ENCODE measurements at regions of chr4 and their contacts with region 1.

Region 1: GRCh38 chr4:142353149-142353738 is 492.9 kb downstream of the INPP4B start:
- DNase-seq: no peak
- ATAC-seq: peak; percentile 41
- H3K4me3 ChIP-seq: no peak overlapping the region
- H3K27ac ChIP-seq: no peak overlapping the region
- H3K4me1 ChIP-seq: no peaks in the 10 kb centered on the region
- H3K27me3 ChIP-seq: no peaks in the 10 kb centered on the region
- CTCF ChIP-seq: peak; percentile 68 to 76 (median 72)
- EP300 ChIP-seq: no peak
- POLR2A ChIP-seq: no peak
- RAD21 ChIP-seq: peak; percentile 73

Region 2: GRCh38 chr4:141724646-141725045 is 628.6 kb before region 1 on chr4:
- CTCF ChIA-PET with region 1: no interaction called
- POLR2A ChIA-PET with region 1: no interaction called
- RAD21 ChIA-PET with region 1: no interaction called
- SMC1A ChIA-PET with region 1: no interaction called
- in situ Hi-C with region 1: no loop called
- intact Hi-C with region 1: no loop called
- DNase-seq: no peak
- ATAC-seq: no peak
- H3K4me3 ChIP-seq: no peak overlapping the region
- H3K27ac ChIP-seq: no peak overlapping the region
- H3K4me1 ChIP-seq: no peaks in the 10 kb centered on the region
- H3K27me3 ChIP-seq: no peaks in the 10 kb centered on the region
- CTCF ChIP-seq: no peak
- EP300 ChIP-seq: no peak
- POLR2A ChIP-seq: no peak
- RAD21 ChIP-seq: no peak

Region 3: GRCh38 chr4:142126890-142127497 is 226.2 kb before region 1 on chr4:
- CTCF ChIA-PET with region 1: interaction called, 6 read pairs
- POLR2A ChIA-PET with region 1: no interaction called
- RAD21 ChIA-PET with region 1: interaction called, 7 read pairs
- SMC1A ChIA-PET with region 1: interaction called, 3 read pairs
- in situ Hi-C with region 1: no loop called
- intact Hi-C with region 1: loop called (anchors 5 kb)
- DNase-seq: peak; percentile 13
- ATAC-seq: peak; percentile 76
- H3K4me3 ChIP-seq: no peak overlapping the region
- H3K27ac ChIP-seq: no peak overlapping the region
- H3K4me1 ChIP-seq: no peaks in the 10 kb centered on the region
- H3K27me3 ChIP-seq: no peaks in the 10 kb centered on the region
- CTCF ChIP-seq: peak; percentile 71 to 77 (median 74)
- EP300 ChIP-seq: no peak
- POLR2A ChIP-seq: no peak
- RAD21 ChIP-seq: peak; percentile 85

Region 4: DNA sequence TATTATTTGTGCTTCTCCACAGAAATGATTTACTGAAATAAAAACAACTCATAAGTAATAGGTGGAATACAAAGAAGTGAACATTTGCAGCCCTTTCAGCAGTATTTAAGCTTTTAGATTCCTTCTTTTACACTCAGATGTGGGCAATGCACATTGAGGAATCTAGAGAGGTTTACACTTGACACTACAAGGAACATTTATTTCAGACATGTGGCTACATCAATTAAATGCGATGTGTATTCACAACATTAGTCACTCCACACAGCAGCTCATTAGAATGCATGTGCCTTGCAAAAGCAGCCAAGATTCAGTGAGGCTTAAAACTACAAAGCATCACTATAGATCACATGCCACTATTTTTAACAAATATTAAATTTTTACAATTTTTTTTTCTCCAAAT is 12.1 kb after region 1 on chr4:
- CTCF ChIA-PET with region 1: interaction called, 68 read pairs
- POLR2A ChIA-PET with region 1: interaction called, 5 read pairs
- RAD21 ChIA-PET with region 1: interaction called, 18 read pairs
- SMC1A ChIA-PET with region 1: interaction called, 76 read pairs
- in situ Hi-C with region 1: no loop called
- intact Hi-C with region 1: no loop called
- DNase-seq: no peak
- ATAC-seq: peak; percentile 12; the same call in 2 of the 3 replicates
- H3K4me3 ChIP-seq: no peak overlapping the region
- H3K27ac ChIP-seq: no peak overlapping the region
- H3K4me1 ChIP-seq: no peaks in the 10 kb centered on the region
- H3K27me3 ChIP-seq: no peaks in the 10 kb centered on the region
- CTCF ChIP-seq: no peak
- EP300 ChIP-seq: no peak
- POLR2A ChIP-seq: no peak
- RAD21 ChIP-seq: no peak

Region 5: GRCh38 chr4:142416711-142417275 is 63.5 kb after region 1 on chr4:
- CTCF ChIA-PET with region 1: interaction called, 135 read pairs
- POLR2A ChIA-PET with region 1: no interaction called
- RAD21 ChIA-PET with region 1: interaction called, 3 read pairs
- SMC1A ChIA-PET with region 1: interaction called, 13 read pairs
- in situ Hi-C with region 1: no loop called
- intact Hi-C with region 1: no loop called
- DNase-seq: no peak
- ATAC-seq: peak; percentile 86
- H3K4me3 ChIP-seq: no peak overlapping the region
- H3K27ac ChIP-seq: no peak overlapping the region
- H3K4me1 ChIP-seq: no peaks in the 10 kb centered on the region
- H3K27me3 ChIP-seq: no peaks in the 10 kb centered on the region; a peak in 1 of 4 replicates
- CTCF ChIP-seq: no peak
- EP300 ChIP-seq: no peak
- POLR2A ChIP-seq: no peak
- RAD21 ChIP-seq: no peak

Region 6: DNA sequence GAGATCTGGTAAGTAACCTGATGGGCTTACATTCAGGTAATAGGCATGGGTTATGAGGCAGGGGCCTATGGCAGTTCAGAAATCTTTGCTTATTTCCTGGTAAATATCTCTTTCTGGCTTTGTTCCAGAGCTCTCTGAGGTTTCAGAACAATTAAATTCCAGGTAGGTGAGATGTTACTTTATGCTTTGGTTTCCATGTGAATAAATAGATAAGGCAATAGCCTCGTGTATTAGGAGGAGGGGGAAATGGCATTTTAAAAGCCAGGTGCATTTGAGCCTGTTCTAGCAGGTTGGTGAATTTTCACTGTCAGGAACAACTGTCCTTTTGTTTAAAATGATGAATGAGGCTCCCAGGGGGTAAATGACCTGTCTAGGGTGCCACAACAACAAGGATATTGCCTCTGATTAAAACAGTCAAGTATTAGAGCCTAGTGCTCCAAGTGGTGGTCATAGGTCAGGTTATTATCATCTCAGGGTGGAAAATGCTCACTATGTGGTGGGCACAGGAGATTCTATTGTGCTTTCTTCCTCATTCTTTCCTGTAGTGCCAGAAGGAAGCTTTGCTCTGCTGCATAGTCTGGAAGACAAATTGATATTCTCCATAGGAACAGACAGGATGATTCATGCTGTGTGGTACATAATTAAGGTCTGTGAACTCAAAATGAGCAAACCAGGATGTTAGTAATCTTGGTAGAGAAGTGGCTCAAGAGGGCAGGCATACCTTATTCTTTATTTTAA is 196.7 kb after region 1 on chr4:
- CTCF ChIA-PET with region 1: interaction called, 5 read pairs
- POLR2A ChIA-PET with region 1: interaction called, 3 read pairs
- RAD21 ChIA-PET with region 1: interaction called, 5 read pairs
- SMC1A ChIA-PET with region 1: interaction called, 13 read pairs
- in situ Hi-C with region 1: no loop called
- intact Hi-C with region 1: no loop called
- DNase-seq: no peak
- ATAC-seq: peak; percentile 35
- H3K4me3 ChIP-seq: no peak overlapping the region
- H3K27ac ChIP-seq: no peak overlapping the region
- H3K4me1 ChIP-seq: no peaks in the 10 kb centered on the region
- H3K27me3 ChIP-seq: no peaks in the 10 kb centered on the region
- CTCF ChIP-seq: no peak
- EP300 ChIP-seq: no peak
- POLR2A ChIP-seq: no peak
- RAD21 ChIP-seq: no peak

Region 7: DNA sequence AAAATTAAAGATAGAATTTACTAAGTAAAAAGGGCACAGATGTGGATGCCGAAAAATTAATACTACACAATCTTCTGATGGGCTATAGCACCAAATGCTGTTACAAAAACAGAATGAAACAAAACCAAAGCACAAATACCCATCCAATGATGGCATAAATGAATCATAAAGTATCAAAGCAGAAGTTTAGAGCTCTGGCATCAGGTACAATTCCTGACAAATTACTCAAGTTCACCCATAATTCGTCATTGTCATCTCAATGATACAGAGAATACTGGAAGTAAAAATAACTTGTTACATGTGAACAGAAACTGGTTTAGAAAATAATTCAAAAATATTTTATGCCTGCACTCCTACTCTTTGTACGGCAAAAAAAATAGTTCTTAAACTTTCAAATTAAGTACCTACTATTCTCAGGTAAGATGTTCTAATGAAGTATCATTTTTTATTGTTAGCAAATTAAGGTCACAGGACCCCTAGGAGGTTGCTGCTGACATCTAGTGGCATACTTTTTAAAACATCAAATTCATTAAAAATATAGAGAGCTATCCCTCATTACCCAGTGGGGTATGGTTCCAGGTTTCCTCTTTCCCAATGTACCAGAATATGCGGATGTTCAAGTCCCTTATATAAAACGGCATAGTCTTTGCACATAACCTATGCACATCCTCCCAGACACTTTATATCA is 366.8 kb after region 1 on chr4:
- CTCF ChIA-PET with region 1: interaction called, 107 read pairs
- POLR2A ChIA-PET with region 1: no interaction called
- RAD21 ChIA-PET with region 1: interaction called, 111 read pairs
- SMC1A ChIA-PET with region 1: interaction called, 45 read pairs
- in situ Hi-C with region 1: loop called (anchors 10 kb)
- intact Hi-C with region 1: loop called (anchors 1 kb)
- DNase-seq: no peak
- ATAC-seq: peak; percentile 67
- H3K4me3 ChIP-seq: no peak overlapping the region
- H3K27ac ChIP-seq: no peak overlapping the region
- H3K4me1 ChIP-seq: no peaks in the 10 kb centered on the region
- H3K27me3 ChIP-seq: no peaks in the 10 kb centered on the region
- CTCF ChIP-seq: peak; percentile 19 to 49 (median 32); a peak in 3 of 6 replicates
- EP300 ChIP-seq: no peak
- POLR2A ChIP-seq: no peak
- RAD21 ChIP-seq: peak; percentile 54

Region 8: DNA sequence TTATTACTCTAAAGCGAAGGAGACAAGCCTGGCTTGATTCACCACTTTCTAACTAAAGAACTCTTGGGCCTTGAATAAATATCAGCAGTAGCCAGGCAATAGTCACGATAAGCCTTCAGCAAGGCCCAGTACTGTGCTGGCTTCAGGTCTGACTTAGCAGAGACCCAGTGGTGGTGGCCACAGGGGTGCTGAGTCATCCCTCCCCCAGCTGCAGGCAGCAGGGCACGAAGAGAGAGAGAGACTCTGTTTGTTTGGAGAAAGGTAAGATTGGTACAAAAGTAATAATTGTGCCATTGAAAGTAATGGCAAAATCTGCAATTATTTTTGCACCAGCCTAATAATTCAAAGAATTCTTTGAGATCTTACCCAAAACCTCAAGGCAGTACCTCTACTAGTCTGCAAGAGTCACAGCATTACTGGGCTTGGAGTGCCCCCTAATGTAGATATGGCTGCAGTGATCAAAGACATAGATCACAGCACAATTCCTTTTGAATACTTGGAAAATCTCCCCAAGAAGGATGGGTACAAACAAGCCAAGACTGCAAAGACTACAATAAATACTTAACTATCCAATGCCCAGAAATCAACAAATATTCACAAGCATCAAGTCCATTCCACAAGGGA is 671.9 kb after region 1 on chr4:
- CTCF ChIA-PET with region 1: interaction called, 4 read pairs
- POLR2A ChIA-PET with region 1: no interaction called
- RAD21 ChIA-PET with region 1: no interaction called
- SMC1A ChIA-PET with region 1: no interaction called
- in situ Hi-C with region 1: no loop called
- intact Hi-C with region 1: loop called (anchors 10 kb)
- DNase-seq: no peak
- ATAC-seq: peak; percentile 70
- H3K4me3 ChIP-seq: no peak overlapping the region
- H3K27ac ChIP-seq: no peak overlapping the region
- H3K4me1 ChIP-seq: peaks cover 4% of the 10 kb centered on the region
- H3K27me3 ChIP-seq: no peaks in the 10 kb centered on the region
- CTCF ChIP-seq: peak; percentile 32 to 53 (median 51); a peak in 5 of 6 replicates
- EP300 ChIP-seq: no peak
- POLR2A ChIP-seq: no peak
- RAD21 ChIP-seq: peak; percentile 80

Measured in GM12878 (cell line).